ENCODE measurements at regions of chr5 and their contacts with region 1.

Region 1: DNA sequence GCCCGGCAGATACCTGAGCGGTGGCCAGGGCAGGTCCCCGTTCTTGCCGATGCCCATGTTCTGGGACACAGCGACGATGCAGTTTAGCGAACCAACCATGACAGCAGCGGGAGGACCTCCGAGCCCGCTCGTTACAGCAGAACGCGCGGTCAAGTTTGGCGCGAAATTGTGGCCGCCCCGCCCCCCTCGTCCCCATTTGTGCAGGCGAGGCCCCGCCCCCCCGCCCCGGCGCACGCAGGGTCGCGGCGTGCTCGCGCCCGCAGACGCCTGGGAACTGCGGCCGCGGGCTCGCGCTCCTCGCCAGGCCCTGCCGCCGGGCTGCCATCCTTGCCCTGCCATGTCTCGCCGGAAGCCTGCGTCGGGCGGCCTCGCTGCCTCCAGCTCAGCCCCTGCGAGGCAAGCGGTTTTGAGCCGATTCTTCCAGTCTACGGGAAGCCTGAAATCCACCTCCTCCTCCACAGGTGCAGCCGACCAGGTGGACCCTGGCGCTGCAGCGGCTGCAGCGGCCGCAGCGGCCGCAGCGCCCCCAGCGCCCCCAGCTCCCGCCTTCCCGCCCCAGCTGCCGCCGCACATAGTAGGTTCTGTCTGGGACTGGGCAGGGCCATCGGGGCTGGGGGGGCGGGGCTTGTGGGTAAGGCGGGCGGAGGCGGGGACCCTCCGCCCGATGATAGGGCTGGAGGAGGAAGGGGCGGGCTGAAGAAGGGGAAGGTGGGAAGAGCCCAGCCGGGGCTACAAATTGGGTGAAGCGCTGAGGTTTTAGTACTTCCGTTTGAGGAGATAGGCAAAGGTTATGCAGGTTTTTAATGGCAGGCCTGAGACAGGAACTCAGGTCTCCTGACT is at the starts of genes DHFR and MSH3:
- DNase-seq: peak; percentile 95
- H3K4me3 ChIP-seq: peak within 1 kb of the TSS; percentile 97
- H3K27ac ChIP-seq: peak within 1 kb of the TSS; percentile 97
- H3K4me1 ChIP-seq: peaks cover 16% of the 10 kb centered on the region
- H3K27me3 ChIP-seq: no peaks in the 10 kb centered on the region
- CTCF ChIP-seq: no peak
- total RNA-seq, gene DHFR: 125 and 126 TPM in 2 replicates
- total RNA-seq, gene MSH3: 16.2 and 18.4 TPM in 2 replicates

Region 2: DNA sequence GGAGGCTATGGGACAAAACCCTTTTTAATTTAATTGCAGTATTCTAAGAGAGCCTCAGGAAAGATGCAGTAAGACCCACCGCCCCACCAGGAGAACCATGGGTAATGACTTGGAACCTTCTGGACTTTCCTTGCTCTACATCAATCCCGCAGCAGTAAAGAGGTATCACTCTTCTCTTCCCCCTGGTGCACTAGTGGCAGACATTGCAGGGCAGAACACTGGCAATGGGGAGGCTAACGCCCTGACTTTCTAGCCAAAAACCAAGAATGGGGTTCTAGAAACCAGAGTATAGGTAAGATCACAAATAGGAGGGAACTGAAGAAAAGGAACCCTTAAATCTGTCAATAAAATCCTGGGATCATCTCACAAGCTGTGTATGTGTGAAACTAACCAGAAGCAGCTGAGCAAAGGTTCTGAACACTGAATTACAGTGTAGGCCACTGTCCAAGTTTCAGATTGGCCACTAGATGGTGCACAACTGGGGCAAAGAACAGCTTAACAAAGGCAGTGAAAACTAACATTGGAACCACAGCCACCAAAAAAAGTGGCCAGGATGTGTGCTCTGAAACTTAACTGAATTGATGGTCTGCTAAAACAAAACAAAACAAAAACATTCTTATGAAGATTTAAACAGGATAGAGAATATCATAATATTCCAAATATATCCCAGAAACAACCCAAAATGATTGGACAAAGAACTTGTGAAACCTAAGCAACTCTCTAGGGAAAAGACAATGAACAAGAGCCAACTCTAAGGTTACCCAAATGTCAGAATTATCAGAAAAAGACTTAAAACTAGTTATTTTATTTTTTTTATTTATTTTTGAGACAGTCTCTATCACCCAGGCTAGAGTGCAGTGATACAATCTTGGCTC is 173.4 kb before region 1 on chr5:
- CTCF ChIA-PET with region 1: interaction called, 3 read pairs
- POLR2A ChIA-PET with region 1: no interaction called
- intact Hi-C with region 1: loop called (anchors 2 kb)
- DNase-seq: peak; percentile 78
- H3K4me3 ChIP-seq: no peak overlapping the region
- H3K27ac ChIP-seq: no peak overlapping the region
- H3K4me1 ChIP-seq: no peaks in the 10 kb centered on the region
- H3K27me3 ChIP-seq: no peaks in the 10 kb centered on the region
- CTCF ChIP-seq: peak; percentile 90

Region 3: DNA sequence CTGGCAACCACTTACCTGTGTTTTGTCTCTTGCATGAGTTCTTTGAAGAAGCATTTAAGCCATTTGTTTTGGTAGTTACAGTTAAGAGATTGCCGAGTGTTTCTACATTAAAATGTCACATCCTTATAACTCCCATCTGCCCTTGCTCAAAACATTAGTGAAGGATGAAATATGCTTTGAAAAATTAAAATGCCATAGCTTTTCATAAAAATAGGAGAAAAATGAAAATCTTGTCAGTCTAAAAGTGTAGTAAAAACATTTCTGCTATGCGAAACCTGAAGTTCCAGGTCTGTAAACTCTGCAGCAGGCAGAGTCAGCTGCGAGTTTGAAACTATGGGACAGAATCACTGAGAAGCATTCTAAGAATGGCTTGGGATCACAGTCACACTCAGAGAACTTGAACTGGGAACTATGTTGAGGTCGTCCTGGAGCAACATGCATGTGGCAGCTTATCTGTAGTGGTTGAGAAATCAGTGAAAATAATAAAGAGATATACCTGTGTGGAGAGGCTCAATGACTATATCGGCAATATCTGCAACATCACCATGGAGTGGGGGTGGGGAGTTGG is 373.0 kb after region 1 on chr5:
- CTCF ChIA-PET with region 1: no interaction called
- POLR2A ChIA-PET with region 1: no interaction called
- intact Hi-C with region 1: no loop called
- DNase-seq: no peak
- H3K4me3 ChIP-seq: no peak overlapping the region
- H3K27ac ChIP-seq: no peak overlapping the region
- H3K4me1 ChIP-seq: peaks cover 4% of the 10 kb centered on the region
- H3K27me3 ChIP-seq: no peaks in the 10 kb centered on the region
- CTCF ChIP-seq: no peak